Activated CD8-positive, alpha-beta memory T cell treated with anti-CD3 and anti-CD28 coated beads, Interleukin-2, amount 10 ng/mL, durations not matched to agents 7 days and 5 days (primary cell): ENCODE measurements at regions of chr10 and their contacts with region 1.

Region 1: DNA sequence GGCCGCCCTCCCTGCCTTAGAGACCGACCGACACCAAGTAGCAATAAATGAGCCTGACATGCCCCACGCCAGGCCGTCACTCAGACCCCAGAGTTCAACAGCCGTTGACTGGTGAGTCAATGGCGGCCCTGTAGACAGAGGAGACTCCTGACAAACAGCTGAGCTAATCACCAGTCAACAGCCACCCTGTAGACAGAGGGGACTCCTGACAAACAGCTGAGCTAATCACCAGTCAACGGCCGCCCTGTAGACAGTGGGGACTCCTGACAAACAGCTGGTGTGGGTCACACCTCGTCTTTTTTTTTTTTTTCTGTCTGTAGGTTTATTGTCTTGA is 16.9 kb upstream of the KNDC1 start:
- DNase-seq: no peak
- ATAC-seq: no peak
- H3K4me3 Mint-ChIP-seq: no peak overlapping the region
- H3K27ac Mint-ChIP-seq: no peak overlapping the region
- H3K4me1 Mint-ChIP-seq: peaks cover 4% of the 10 kb centered on the region
- H3K27me3 Mint-ChIP-seq: peaks cover 30% of the 10 kb centered on the region

Region 2: GRCh38 chr10:133110133-133110532 is 33.0 kb before region 1 on chr10:
- CTCF ChIA-PET with region 1: no interaction called
- DNase-seq: no peak
- ATAC-seq: no peak
- H3K4me3 Mint-ChIP-seq: no peak overlapping the region
- H3K27ac Mint-ChIP-seq: no peak overlapping the region
- H3K4me1 Mint-ChIP-seq: no peaks in the 10 kb centered on the region
- H3K27me3 Mint-ChIP-seq: no peaks in the 10 kb centered on the region

Region 3: DNA sequence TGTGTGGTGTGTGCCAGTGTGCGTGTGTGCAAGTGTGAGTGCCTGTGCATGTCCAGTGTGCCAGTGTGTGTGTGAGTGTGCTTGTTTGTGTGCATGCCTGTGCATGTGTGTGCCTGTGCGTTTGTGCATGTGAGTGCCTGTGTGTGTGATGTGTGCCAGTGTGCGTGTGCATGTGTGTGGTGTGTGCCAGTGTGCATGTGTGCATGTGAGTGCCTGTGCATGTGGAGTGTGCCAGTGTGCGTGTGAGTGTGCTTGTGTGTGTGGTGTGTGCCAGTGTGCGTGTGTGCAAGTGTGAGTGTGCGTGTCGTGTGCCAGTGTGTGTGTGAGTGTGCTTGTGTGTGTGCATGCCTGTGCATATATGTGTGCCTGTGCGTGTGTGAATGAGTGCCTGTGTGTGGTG is 21.7 kb before region 1 on chr10:
- CTCF ChIA-PET with region 1: no interaction called
- DNase-seq: no peak
- ATAC-seq: no peak
- H3K4me3 Mint-ChIP-seq: no peak overlapping the region
- H3K27ac Mint-ChIP-seq: no peak overlapping the region
- H3K4me1 Mint-ChIP-seq: peaks cover 8% of the 10 kb centered on the region
- H3K27me3 Mint-ChIP-seq: peaks cover 4% of the 10 kb centered on the region

Region 4: DNA sequence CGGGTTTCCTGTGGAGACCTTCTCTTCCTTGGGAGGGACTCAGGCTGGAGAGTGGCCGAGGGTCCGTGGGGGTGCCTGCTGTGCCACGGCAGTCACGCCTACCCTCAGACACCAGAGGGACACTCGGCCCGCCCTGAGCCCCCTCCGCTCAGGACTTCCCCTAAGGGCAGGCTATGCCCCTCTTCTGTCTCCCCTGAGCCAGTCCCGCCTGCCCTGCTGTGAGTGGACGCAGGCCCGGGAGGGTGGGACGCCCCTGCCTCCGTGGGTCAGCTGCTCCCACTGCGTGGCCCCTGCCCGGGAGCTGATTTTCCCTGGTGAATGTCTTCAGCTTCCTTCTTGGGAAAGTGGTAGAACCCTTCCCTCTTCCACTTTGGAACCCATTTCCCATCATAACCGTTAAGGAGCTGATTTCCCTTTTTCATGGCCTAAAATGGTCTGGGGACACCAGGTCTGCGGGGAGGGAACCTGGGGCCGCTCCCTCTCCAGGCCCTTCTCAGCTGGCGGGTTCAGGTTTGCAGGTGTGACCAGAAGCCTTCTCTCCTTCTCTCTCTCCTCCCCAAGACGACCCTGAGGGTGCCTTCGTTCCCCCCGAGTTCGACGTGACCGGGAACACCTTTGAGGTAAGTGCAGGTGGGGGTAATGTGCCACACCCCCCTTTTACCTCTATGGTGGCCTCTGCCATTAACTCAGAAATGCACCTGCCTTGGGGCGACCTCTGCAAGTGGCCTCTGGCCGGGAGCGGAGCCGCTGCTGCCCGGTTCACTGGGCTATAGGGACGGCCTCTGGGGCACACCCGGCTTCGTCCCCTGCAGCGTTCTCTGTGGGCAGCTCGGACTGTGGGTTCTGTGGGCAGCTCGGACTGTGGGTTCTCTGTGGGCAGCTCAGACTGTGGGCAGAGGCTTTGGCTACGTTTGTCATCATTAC is 24.8 kb after region 1 on chr10:
- CTCF ChIA-PET with region 1: no interaction called
- DNase-seq: no peak
- ATAC-seq: no peak
- H3K4me3 Mint-ChIP-seq: no peak overlapping the region
- H3K27ac Mint-ChIP-seq: no peak overlapping the region
- H3K4me1 Mint-ChIP-seq: no peaks in the 10 kb centered on the region
- H3K27me3 Mint-ChIP-seq: no peaks in the 10 kb centered on the region

Region 5: DNA sequence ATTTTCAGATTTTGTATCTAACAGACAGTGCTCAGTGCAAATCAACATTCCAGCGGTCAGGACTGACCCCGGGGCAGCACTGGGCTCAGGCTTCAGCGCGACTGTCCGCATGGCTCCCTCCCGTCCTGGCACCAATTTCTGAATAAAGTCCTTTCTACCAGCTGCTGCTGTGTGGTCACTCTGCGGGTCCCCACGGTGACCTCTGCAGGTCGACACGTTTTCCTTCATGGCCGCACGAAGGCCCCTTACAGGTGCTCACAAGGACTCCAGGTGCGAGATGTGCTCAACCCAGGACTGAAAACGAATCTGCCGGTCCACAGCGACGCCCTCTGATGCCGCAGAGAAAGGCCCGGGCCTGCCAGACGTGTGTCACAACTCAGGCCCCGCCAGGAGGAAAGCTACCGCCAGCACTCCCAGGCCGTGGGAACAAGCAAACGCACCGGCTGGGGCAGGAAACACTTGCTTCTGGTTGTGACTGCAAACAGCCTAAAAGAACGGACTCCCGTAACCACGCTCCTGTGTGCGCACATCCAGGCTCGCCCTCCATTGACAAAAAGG is 83.2 kb after region 1 on chr10:
- CTCF ChIA-PET with region 1: interaction called, 17 read pairs
- DNase-seq: peak; percentile 60
- ATAC-seq: peak; percentile 55
- H3K4me3 Mint-ChIP-seq: peak overlapping the region; percentile 58
- H3K27ac Mint-ChIP-seq: peak overlapping the region; percentile 79
- H3K4me1 Mint-ChIP-seq: peaks cover 26% of the 10 kb centered on the region
- H3K27me3 Mint-ChIP-seq: peaks cover 32% of the 10 kb centered on the region